K562 (cell line): ENCODE measurements at regions of chr2 and their contacts with region 1.

Region 1: GRCh38 chr2:70142590-70143313 is 48.1 kb downstream of the C2orf42 start:
- DNase-seq: peak; percentile 97 to 100 (median 98)
- ATAC-seq: peak; percentile 77
- H3K4me3 ChIP-seq: peak overlapping the region; percentile 28
- H3K27ac ChIP-seq: peak overlapping the region; percentile 97
- H3K4me1 ChIP-seq: peaks cover 54 to 59% of the 10 kb centered on the region in 2 experiments
- H3K27me3 ChIP-seq: no peaks in the 10 kb centered on the region
- CTCF ChIP-seq: peak; percentile 93 to 98 (median 95)
- EP300 ChIP-seq: peak; percentile 60
- POLR2A ChIP-seq: peak; percentile 85
- RAD21 ChIP-seq: peak; percentile 99 to 100

Region 2: GRCh38 chr2:69667805-69668382 is 474.9 kb before region 1 on chr2:
- CTCF ChIA-PET with region 1: no interaction called
- POLR2A ChIA-PET with region 1: no interaction called
- in situ Hi-C with region 1: no loop called
- intact Hi-C with region 1: no loop called
- DNase-seq: no peak
- ATAC-seq: no peak
- H3K4me3 ChIP-seq: no peak overlapping the region
- H3K27ac ChIP-seq: no peak overlapping the region
- H3K4me1 ChIP-seq: peaks cover 0 to 6% of the 10 kb centered on the region in 2 experiments; a peak in 1 of 5 replicates
- H3K27me3 ChIP-seq: no peaks in the 10 kb centered on the region
- CTCF ChIP-seq: no peak
- EP300 ChIP-seq: no peak
- POLR2A ChIP-seq: no peak
- RAD21 ChIP-seq: no peak

Region 3: GRCh38 chr2:69893684-69894551 is 248.8 kb before region 1 on chr2 and contains the start of gene SNRNP27:
- CTCF ChIA-PET with region 1: no interaction called
- POLR2A ChIA-PET with region 1: no interaction called
- in situ Hi-C with region 1: no loop called
- intact Hi-C with region 1: no loop called
- DNase-seq: peak; percentile 67 to 91 (median 77)
- ATAC-seq: peak; percentile 96
- H3K4me3 ChIP-seq: peak within 1 kb of the TSS; percentile 68
- H3K27ac ChIP-seq: peak within 1 kb of the TSS; percentile 79
- H3K4me1 ChIP-seq: peaks cover 3 to 7% of the 10 kb centered on the region in 2 experiments; a peak in 4 of 5 replicates
- H3K27me3 ChIP-seq: no peaks in the 10 kb centered on the region
- CTCF ChIP-seq: no peak
- EP300 ChIP-seq: no peak
- POLR2A ChIP-seq: peak; percentile 90
- RAD21 ChIP-seq: peak in 1 of 2 experiments; percentile 12; a peak in 1 of 4 replicates
- polyA plus RNA-seq, gene SNRNP27: 29.2 to 33.7 TPM

Region 4: GRCh38 chr2:69926849-69927515 is 215.8 kb before region 1 on chr2:
- CTCF ChIA-PET with region 1: no interaction called
- POLR2A ChIA-PET with region 1: interaction called, 5 read pairs
- in situ Hi-C with region 1: loop called (anchors 5 kb)
- intact Hi-C with region 1: loop called (anchors 5 kb)
- DNase-seq: no peak
- ATAC-seq: 0 out of 3 replicates have a peak, but pooled peaks have one; percentile 14
- H3K4me3 ChIP-seq: no peak overlapping the region
- H3K27ac ChIP-seq: no peak overlapping the region
- H3K4me1 ChIP-seq: peaks cover under 1 to 4% of the 10 kb centered on the region in 2 experiments; a peak in 1 of 5 replicates
- H3K27me3 ChIP-seq: no peaks in the 10 kb centered on the region
- CTCF ChIP-seq: no peak
- EP300 ChIP-seq: no peak
- POLR2A ChIP-seq: no peak
- RAD21 ChIP-seq: no peak

Region 5: DNA sequence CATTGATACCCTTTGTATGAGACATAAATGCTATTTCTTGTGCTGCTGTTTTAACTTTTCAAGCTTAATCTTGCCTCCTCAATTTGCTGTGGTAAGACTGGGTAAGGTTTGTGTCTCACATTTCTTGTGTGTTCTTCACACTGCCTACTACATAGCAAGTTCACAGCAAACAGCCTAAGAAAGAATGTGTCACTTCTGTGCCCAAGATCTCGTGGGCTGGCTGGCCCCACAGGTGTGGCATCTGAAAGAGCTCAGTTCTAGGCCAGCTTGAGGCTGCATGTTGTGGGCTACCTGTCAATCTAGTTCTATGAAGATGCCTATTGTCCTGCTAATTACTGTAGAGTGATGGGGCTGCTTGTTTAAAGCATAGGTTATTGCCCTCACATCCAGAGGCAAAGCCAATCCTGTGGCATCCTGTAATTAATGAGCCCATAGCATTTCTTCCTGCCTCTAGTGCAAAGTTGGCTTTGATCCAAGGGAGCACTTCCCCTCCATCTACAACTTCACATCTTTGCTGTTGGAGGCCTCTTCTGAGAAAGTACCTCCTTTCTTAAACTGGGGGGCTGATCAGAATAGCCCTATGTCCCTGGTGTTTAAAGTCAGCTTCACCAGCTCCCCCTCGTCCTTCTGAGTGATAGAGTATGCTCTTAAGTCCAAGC is 140.4 kb before region 1 on chr2:
- CTCF ChIA-PET with region 1: no interaction called
- POLR2A ChIA-PET with region 1: no interaction called
- in situ Hi-C with region 1: no loop called
- intact Hi-C with region 1: loop called (anchors 5 kb)
- DNase-seq: peak in 1 of 4 experiments; percentile 7
- ATAC-seq: no peak
- H3K4me3 ChIP-seq: no peak overlapping the region
- H3K27ac ChIP-seq: no peak overlapping the region
- H3K4me1 ChIP-seq: peaks cover 27 to 34% of the 10 kb centered on the region in 2 experiments; a peak in 4 of 5 replicates
- H3K27me3 ChIP-seq: no peaks in the 10 kb centered on the region
- CTCF ChIP-seq: no peak
- EP300 ChIP-seq: no peak
- POLR2A ChIP-seq: no peak
- RAD21 ChIP-seq: no peak

Region 6: GRCh38 chr2:70041663-70042062 is 101.1 kb before region 1 on chr2:
- CTCF ChIA-PET with region 1: no interaction called
- POLR2A ChIA-PET with region 1: no interaction called
- in situ Hi-C with region 1: no loop called
- intact Hi-C with region 1: no loop called
- DNase-seq: no peak
- ATAC-seq: no peak
- H3K4me3 ChIP-seq: no peak overlapping the region
- H3K27ac ChIP-seq: no peak overlapping the region
- H3K4me1 ChIP-seq: peaks cover 4 to 9% of the 10 kb centered on the region in 2 experiments
- H3K27me3 ChIP-seq: no peaks in the 10 kb centered on the region
- CTCF ChIP-seq: no peak
- EP300 ChIP-seq: no peak
- POLR2A ChIP-seq: no peak
- RAD21 ChIP-seq: no peak

Region 7: GRCh38 chr2:70124983-70125480 is 17.7 kb before region 1 on chr2:
- CTCF ChIA-PET with region 1: no interaction called
- POLR2A ChIA-PET with region 1: interaction called, 74 read pairs
- in situ Hi-C with region 1: no loop called
- intact Hi-C with region 1: loop called (anchors 2 kb)
- DNase-seq: peak; percentile 62 to 69 (median 64)
- ATAC-seq: peak; percentile 59
- H3K4me3 ChIP-seq: peak overlapping the region; percentile 61
- H3K27ac ChIP-seq: peak overlapping the region; percentile 100
- H3K4me1 ChIP-seq: peaks cover 48 to 52% of the 10 kb centered on the region in 2 experiments
- H3K27me3 ChIP-seq: no peaks in the 10 kb centered on the region
- CTCF ChIP-seq: no peak
- EP300 ChIP-seq: no peak
- POLR2A ChIP-seq: no peak
- RAD21 ChIP-seq: no peak

Region 8: GRCh38 chr2:70190418-70191243 is 47.9 kb after region 1 on chr2 and contains the start of gene C2orf42:
- CTCF ChIA-PET with region 1: no interaction called
- POLR2A ChIA-PET with region 1: interaction called, 3 read pairs
- in situ Hi-C with region 1: no loop called
- intact Hi-C with region 1: loop called (anchors 2 kb)
- DNase-seq: peak; percentile 91 to 99 (median 96)
- ATAC-seq: peak; percentile 96
- H3K4me3 ChIP-seq: peak within 1 kb of the TSS; percentile 62
- H3K27ac ChIP-seq: peak within 1 kb of the TSS; percentile 85
- H3K4me1 ChIP-seq: peaks cover 3 to 4% of the 10 kb centered on the region in 2 experiments; a peak in 2 of 5 replicates
- H3K27me3 ChIP-seq: no peaks in the 10 kb centered on the region
- CTCF ChIP-seq: peak; percentile 19 to 44 (median 35); a peak in 5 of 6 replicates
- EP300 ChIP-seq: 0 out of 2 replicates have a peak, but pooled peaks have one; percentile 3
- POLR2A ChIP-seq: peak; percentile 96
- RAD21 ChIP-seq: peak; percentile 7 to 26; a peak in 3 of 4 replicates
- polyA plus RNA-seq, gene C2orf42: 4.6 to 4.9 TPM

Region 9: GRCh38 chr2:70255637-70256314 is 113.0 kb after region 1 on chr2:
- CTCF ChIA-PET with region 1: no interaction called
- POLR2A ChIA-PET with region 1: no interaction called
- in situ Hi-C with region 1: no loop called
- intact Hi-C with region 1: no loop called
- DNase-seq: no peak
- ATAC-seq: no peak
- H3K4me3 ChIP-seq: no peak overlapping the region
- H3K27ac ChIP-seq: no peak overlapping the region
- H3K4me1 ChIP-seq: peaks cover 11 to 16% of the 10 kb centered on the region in 2 experiments; a peak in 4 of 5 replicates
- H3K27me3 ChIP-seq: no peaks in the 10 kb centered on the region
- CTCF ChIP-seq: no peak
- EP300 ChIP-seq: no peak
- POLR2A ChIP-seq: no peak
- RAD21 ChIP-seq: no peak

Region 10: DNA sequence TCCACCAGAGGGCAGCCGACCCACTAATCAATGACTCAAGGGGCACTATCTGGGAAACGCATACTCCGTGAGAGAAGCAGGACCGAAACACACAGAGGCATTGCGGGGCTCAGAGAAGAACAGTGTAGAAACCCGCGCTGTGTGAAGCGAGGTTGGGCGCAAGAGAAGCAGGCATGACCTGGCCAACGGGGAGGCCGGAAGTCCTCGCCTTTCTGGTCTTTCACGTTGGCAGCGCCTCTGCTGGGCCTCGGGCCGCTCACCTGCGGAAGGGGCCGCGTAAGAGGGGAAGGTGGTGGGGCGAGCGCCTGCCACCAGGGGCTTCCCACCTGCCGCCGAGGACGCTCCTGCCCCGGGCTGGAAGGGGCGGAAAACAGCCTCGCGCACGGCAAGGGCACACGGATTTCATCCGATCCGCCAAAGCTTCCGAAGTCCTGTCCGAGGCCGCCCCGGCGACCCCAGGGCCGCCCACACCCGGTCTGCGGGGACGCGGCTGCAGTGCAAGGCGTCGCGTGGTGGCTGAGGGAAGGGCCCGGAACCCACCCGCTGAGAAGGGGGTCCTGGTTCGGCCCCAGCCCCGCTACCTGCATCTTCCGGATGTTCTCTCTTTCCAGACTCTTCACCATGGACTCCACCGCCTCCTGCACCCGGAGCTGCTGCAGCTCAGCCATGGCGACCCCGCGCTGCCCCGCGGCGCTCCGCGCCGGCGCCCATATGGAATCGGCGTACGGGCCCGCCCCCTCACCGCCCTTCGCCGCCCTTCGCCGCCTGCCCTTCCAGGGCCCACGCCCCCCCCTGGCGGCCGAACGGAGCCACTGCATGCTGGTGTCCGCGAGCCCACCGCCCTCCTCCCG is 158.8 kb after region 1 on chr2 and contains the start of gene FAM136A:
- CTCF ChIA-PET with region 1: no interaction called
- POLR2A ChIA-PET with region 1: no interaction called
- in situ Hi-C with region 1: no loop called
- intact Hi-C with region 1: loop called (anchors 5 kb)
- DNase-seq: peak; percentile 91 to 96 (median 93)
- ATAC-seq: peak; percentile 96
- H3K4me3 ChIP-seq: peak within 1 kb of the TSS; percentile 55
- H3K27ac ChIP-seq: peak within 1 kb of the TSS; percentile 87
- H3K4me1 ChIP-seq: peaks cover 6 to 14% of the 10 kb centered on the region in 2 experiments; a peak in 4 of 5 replicates
- H3K27me3 ChIP-seq: peaks cover 0 to 5% of the 10 kb centered on the region in 2 experiments; a peak in 2 of 5 replicates
- CTCF ChIP-seq: peak; percentile 81 to 94 (median 89)
- EP300 ChIP-seq: no peak
- POLR2A ChIP-seq: peak; percentile 88
- RAD21 ChIP-seq: peak; percentile 62 to 77; a peak in 3 of 4 replicates
- polyA plus RNA-seq, gene FAM136A: 125 to 151 TPM